SK-N-SH (cell line): ENCODE measurements at regions of chr16 and their contacts with region 1.

Region 1: GRCh38 chr16:74862741-74863244 is 88.2 kb upstream of the FA2H start:
- DNase-seq: peak; percentile 71
- H3K4me3 ChIP-seq: no peak overlapping the region
- H3K27ac ChIP-seq: no peak overlapping the region
- H3K4me1 ChIP-seq: no peaks in the 10 kb centered on the region
- H3K27me3 ChIP-seq: no peaks in the 10 kb centered on the region
- CTCF ChIP-seq: peak; percentile 95
- EP300 ChIP-seq: no peak
- RAD21 ChIP-seq: peak; percentile 93

Region 2: GRCh38 chr16:74666425-74667254 is 196.2 kb before region 1 on chr16 and contains the start of gene RFWD3:
- CTCF ChIA-PET with region 1: interaction called, 14 read pairs
- POLR2A ChIA-PET with region 1: no interaction called
- DNase-seq: peak; percentile 98
- H3K4me3 ChIP-seq: peak within 1 kb of the TSS; percentile 79 to 82
- H3K27ac ChIP-seq: peak within 1 kb of the TSS; percentile 67
- H3K4me1 ChIP-seq: peaks cover 0 to 5% of the 10 kb centered on the region in 2 experiments; a peak in 2 of 4 replicates
- H3K27me3 ChIP-seq: no peaks in the 10 kb centered on the region
- CTCF ChIP-seq: no peak
- EP300 ChIP-seq: no peak; a peak in 1 of 4 replicates
- RAD21 ChIP-seq: no peak
- polyA plus RNA-seq, gene RFWD3: 13.2 and 15.9 TPM in 2 replicates

Region 3: GRCh38 chr16:74718741-74719610 is 143.8 kb before region 1 on chr16:
- CTCF ChIA-PET with region 1: interaction called, 192 read pairs
- POLR2A ChIA-PET with region 1: no interaction called
- DNase-seq: no peak
- H3K4me3 ChIP-seq: no peak overlapping the region
- H3K27ac ChIP-seq: no peak overlapping the region
- H3K4me1 ChIP-seq: no peaks in the 10 kb centered on the region
- H3K27me3 ChIP-seq: no peaks in the 10 kb centered on the region; the same call in 1 of the 2 replicates
- CTCF ChIP-seq: no peak
- EP300 ChIP-seq: no peak
- RAD21 ChIP-seq: no peak

Region 4: DNA sequence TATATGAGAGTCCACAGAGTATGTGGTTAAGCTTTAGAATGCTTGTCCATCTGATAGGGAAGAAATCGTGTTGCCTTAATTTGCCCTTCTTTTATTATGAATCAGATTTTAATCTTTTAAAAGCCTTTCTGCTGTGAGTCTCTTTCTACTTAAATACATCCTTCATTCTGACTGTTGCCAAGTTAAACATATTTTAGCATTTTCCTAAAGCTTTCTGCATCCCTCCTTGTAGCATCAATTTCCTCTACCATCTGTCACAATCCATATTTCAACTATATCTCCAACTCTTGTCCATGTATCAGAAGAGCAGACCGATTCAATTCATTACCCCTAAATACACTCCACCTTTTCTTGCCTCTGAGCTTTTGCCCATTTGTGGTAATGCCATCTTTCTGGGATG is 67.7 kb before region 1 on chr16:
- CTCF ChIA-PET with region 1: interaction called, 20 read pairs
- POLR2A ChIA-PET with region 1: no interaction called
- DNase-seq: no peak
- H3K4me3 ChIP-seq: no peak overlapping the region
- H3K27ac ChIP-seq: no peak overlapping the region
- H3K4me1 ChIP-seq: no peaks in the 10 kb centered on the region
- H3K27me3 ChIP-seq: no peaks in the 10 kb centered on the region; the same call in 1 of the 2 replicates
- CTCF ChIP-seq: no peak
- EP300 ChIP-seq: no peak
- RAD21 ChIP-seq: no peak

Region 5: DNA sequence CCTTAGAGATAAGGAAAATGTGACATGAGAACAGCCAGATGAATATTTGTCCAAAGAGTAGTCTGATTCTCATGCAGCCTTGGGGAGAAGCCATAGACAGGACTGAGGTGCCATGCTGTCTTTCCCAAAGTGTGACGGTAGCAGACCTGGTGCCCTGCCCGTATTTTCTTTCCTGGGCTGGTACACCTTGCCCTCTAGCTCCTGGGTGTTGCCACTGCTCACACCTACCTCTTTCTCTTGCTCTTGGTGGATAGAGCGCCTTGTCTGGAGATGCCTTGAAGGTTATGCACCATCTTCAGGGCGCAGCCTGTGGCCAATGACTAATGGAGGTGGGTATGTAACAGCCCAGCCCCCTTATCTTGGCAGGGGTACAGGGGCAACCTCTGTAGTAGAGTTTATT is 41.9 kb before region 1 on chr16:
- CTCF ChIA-PET with region 1: interaction called, 22 read pairs
- POLR2A ChIA-PET with region 1: no interaction called
- DNase-seq: no peak
- H3K4me3 ChIP-seq: no peak overlapping the region
- H3K27ac ChIP-seq: no peak overlapping the region
- H3K4me1 ChIP-seq: no peaks in the 10 kb centered on the region
- H3K27me3 ChIP-seq: peaks cover 5% of the 10 kb centered on the region; the same call in 1 of the 2 replicates
- CTCF ChIP-seq: no peak
- EP300 ChIP-seq: no peak
- RAD21 ChIP-seq: no peak

Region 6: GRCh38 chr16:74843719-74844433 is 18.9 kb before region 1 on chr16:
- CTCF ChIA-PET with region 1: interaction called, 61 read pairs
- POLR2A ChIA-PET with region 1: no interaction called
- DNase-seq: no peak
- H3K4me3 ChIP-seq: no peak overlapping the region
- H3K27ac ChIP-seq: no peak overlapping the region
- H3K4me1 ChIP-seq: no peaks in the 10 kb centered on the region
- H3K27me3 ChIP-seq: no peaks in the 10 kb centered on the region
- CTCF ChIP-seq: no peak
- EP300 ChIP-seq: no peak
- RAD21 ChIP-seq: no peak

Region 7: GRCh38 chr16:74892574-74893461 is 30.0 kb after region 1 on chr16:
- CTCF ChIA-PET with region 1: interaction called, 17 read pairs
- POLR2A ChIA-PET with region 1: no interaction called
- DNase-seq: no peak
- H3K4me3 ChIP-seq: no peak overlapping the region
- H3K27ac ChIP-seq: no peak overlapping the region
- H3K4me1 ChIP-seq: 0 out of 4 replicates have a peak, but pooled peaks cover 0 to 3% of the 10 kb centered on the region in 2 experiments
- H3K27me3 ChIP-seq: no peaks in the 10 kb centered on the region
- CTCF ChIP-seq: no peak
- EP300 ChIP-seq: no peak
- RAD21 ChIP-seq: no peak